ENCODE measurements at regions of chr3 and their contacts with region 1.

Region 1: DNA sequence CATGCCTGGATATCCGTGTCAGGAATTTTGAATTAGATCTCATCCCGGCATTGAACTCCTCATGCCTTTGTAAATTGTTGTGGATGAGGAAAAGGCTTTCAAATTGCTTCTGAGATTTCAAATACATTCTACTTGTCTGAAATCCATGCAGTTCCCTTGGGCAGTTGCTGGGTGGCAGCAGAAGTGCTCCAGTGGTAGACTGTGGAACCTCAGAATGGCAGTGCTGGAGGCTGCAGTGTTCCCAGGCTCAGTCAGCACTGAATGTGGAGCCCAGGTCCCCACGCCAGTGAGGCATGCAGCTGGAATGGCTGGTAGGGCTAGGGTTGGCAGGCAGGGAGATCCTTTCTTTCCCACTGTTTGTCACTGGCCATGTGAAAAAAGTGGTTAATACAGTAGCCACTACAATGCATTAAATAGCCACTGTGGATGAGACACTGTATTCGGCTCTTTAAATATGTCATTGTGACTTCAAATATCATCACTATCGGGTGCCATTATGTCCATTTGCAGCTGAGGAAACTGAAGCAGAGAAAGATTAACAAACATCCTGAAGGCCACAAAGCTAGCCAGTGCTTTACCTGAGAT is 98.6 kb downstream of the TPRG1 start:
- DNase-seq: peak; percentile 7 to 21
- ATAC-seq: peak; percentile 34 to 86 (median 78)
- H3K4me3 ChIP-seq: no peak overlapping the region
- H3K27ac ChIP-seq: no peak overlapping the region
- H3K4me1 ChIP-seq: no peaks in the 10 kb centered on the region
- H3K27me3 ChIP-seq: no peaks in the 10 kb centered on the region
- CTCF ChIP-seq: peak in 8 of 9 donors; percentile 21 to 58 (median 46)

Region 2: DNA sequence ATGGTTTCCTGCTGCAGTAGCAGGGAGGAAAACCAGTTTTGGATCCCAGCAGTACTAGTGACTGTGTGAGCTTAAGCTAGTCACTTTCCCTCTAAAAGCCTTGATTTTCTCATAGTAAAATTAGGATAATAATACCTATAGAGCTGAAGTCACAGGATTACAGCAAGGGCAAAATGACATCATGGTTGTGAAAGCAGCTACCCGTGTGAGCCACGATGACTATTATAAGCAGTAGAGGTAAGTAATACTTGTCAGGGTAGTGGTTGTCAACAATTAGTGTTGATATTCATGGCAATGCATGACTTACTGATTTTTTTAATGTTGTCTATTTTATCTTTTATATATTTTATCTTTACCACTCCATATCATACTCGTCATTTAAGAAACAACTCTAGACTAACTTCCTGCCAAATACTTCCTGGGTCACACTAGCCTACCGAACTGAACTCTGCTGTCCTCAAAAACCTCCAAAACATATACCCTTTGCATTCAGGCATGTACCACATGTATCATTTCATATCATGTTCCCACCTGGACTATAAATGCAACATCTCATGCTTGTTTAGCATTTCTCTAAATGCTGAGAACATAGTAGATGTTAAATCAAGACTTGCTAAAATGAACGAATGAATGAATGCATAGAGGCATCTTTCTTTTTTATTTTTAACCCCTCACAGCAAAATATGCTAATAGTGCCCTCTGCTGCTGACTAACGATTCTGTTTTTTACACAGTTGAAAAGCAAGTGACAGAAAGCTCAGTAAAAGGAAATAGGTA is 677.8 kb after region 1 on chr3:
- intact Hi-C with region 1: loop called (anchors 2 to 5 kb)
- DNase-seq: no peak
- ATAC-seq: no peak
- H3K4me3 ChIP-seq: no peak overlapping the region
- H3K27ac ChIP-seq: no peak overlapping the region
- H3K4me1 ChIP-seq: no peaks in the 10 kb centered on the region
- H3K27me3 ChIP-seq: peaks cover 0 to 33% (median 4%) of the 10 kb centered on the region in 7 donors
- CTCF ChIP-seq: peak; percentile 15 to 66 (median 56)

Measured in heart right ventricle (tissue), 16 donors.